Left colon (tissue), 2 donors: ENCODE measurements at regions of chr9 and their contacts with region 1.

Region 1: GRCh38 chr9:130327070-130327780 is 61.7 kb downstream of the HMCN2 start:
- DNase-seq: no peak
- ATAC-seq: no peak

Region 2: GRCh38 chr9:130243015-130243734 is 84.0 kb before region 1 on chr9:
- intact Hi-C with region 1: loop called in 1 of 2 experiments (anchors 10 kb)
- DNase-seq: peak in 1 of 2 donors; percentile 86
- ATAC-seq: peak; percentile 67